Mammary epithelial cell (primary cell): ENCODE measurements at regions of chr5 and their contacts with region 1.

Region 1: GRCh38 chr5:168987543-168988300 is 313.2 kb downstream of the SLIT3 start:
- DNase-seq: peak; percentile 55
- H3K4me3 ChIP-seq: no peak overlapping the region
- H3K27ac ChIP-seq: no peak overlapping the region
- H3K4me1 ChIP-seq: peaks cover 14% of the 10 kb centered on the region
- H3K27me3 ChIP-seq: no peaks in the 10 kb centered on the region
- CTCF ChIP-seq: peak; percentile 86 to 88

Region 2: DNA sequence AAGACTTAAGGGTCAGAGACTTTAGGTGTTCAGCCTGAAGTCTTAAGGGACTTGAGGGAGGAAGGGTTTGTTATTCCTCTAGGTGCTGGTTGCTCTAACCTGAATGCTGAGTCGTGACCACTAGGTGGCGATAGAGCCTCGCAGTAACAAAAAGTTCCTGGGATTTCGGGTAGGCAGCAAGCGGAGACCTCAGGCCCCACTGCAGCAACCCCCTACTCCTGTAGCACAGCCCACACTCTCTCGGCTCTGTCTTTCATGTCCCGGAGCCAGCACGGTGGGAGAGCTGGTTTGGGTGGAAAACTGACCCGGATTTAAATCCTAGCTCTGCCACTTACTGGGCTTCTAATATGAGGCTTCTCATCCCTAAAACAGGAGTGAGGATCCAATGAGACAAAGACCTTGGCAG is 308.2 kb before region 1 on chr5:
- CTCF ChIA-PET with region 1: no interaction called
- dilution Hi-C with region 1: no loop called
- in situ Hi-C with region 1: no loop called
- intact Hi-C with region 1: loop called (anchors 1 kb)
- DNase-seq: peak; percentile 52
- H3K4me3 ChIP-seq: no peak overlapping the region
- H3K27ac ChIP-seq: no peak overlapping the region
- H3K4me1 ChIP-seq: no peaks in the 10 kb centered on the region
- H3K27me3 ChIP-seq: no peaks in the 10 kb centered on the region
- CTCF ChIP-seq: peak; percentile 87 to 92

Region 3: GRCh38 chr5:168706655-168707069 is 281.1 kb before region 1 on chr5:
- CTCF ChIA-PET with region 1: no interaction called
- dilution Hi-C with region 1: no loop called
- in situ Hi-C with region 1: no loop called
- intact Hi-C with region 1: loop called (anchors 1 kb)
- DNase-seq: peak; percentile 23
- H3K4me3 ChIP-seq: no peak overlapping the region
- H3K27ac ChIP-seq: no peak overlapping the region
- H3K4me1 ChIP-seq: no peaks in the 10 kb centered on the region
- H3K27me3 ChIP-seq: no peaks in the 10 kb centered on the region
- CTCF ChIP-seq: peak; percentile 48 to 86

Region 4: GRCh38 chr5:168807287-168807686 is 180.4 kb before region 1 on chr5:
- CTCF ChIA-PET with region 1: no interaction called
- dilution Hi-C with region 1: no loop called
- in situ Hi-C with region 1: no loop called
- intact Hi-C with region 1: no loop called
- DNase-seq: no peak
- H3K4me3 ChIP-seq: no peak overlapping the region
- H3K27ac ChIP-seq: no peak overlapping the region
- H3K4me1 ChIP-seq: no peaks in the 10 kb centered on the region
- H3K27me3 ChIP-seq: no peaks in the 10 kb centered on the region
- CTCF ChIP-seq: no peak

Region 5: GRCh38 chr5:169006842-169007790 is 19.4 kb after region 1 on chr5:
- CTCF ChIA-PET with region 1: interaction called, 35 read pairs
- dilution Hi-C with region 1: no loop called
- in situ Hi-C with region 1: no loop called
- intact Hi-C with region 1: no loop called
- DNase-seq: peak; percentile 91
- H3K4me3 ChIP-seq: no peak overlapping the region
- H3K27ac ChIP-seq: peak overlapping the region; percentile 91
- H3K4me1 ChIP-seq: peaks cover 23% of the 10 kb centered on the region
- H3K27me3 ChIP-seq: no peaks in the 10 kb centered on the region
- CTCF ChIP-seq: no peak

Region 6: GRCh38 chr5:169100421-169101075 is 112.8 kb after region 1 on chr5:
- CTCF ChIA-PET with region 1: no interaction called
- dilution Hi-C with region 1: no loop called
- in situ Hi-C with region 1: no loop called
- intact Hi-C with region 1: loop called (anchors 5 kb)
- DNase-seq: peak; percentile 94
- H3K4me3 ChIP-seq: no peak overlapping the region
- H3K27ac ChIP-seq: peak overlapping the region; percentile 7
- H3K4me1 ChIP-seq: peaks cover 34% of the 10 kb centered on the region
- H3K27me3 ChIP-seq: no peaks in the 10 kb centered on the region
- CTCF ChIP-seq: peak in 1 of 2 donors; percentile 25

Region 7: GRCh38 chr5:169197343-169197742 is 209.6 kb after region 1 on chr5:
- CTCF ChIA-PET with region 1: interaction called, 7 read pairs
- dilution Hi-C with region 1: no loop called
- in situ Hi-C with region 1: loop called in 1 of 2 experiments (anchors 10 kb)
- intact Hi-C with region 1: loop called (anchors 1 kb)
- DNase-seq: peak; percentile 24
- H3K4me3 ChIP-seq: no peak overlapping the region
- H3K27ac ChIP-seq: no peak overlapping the region
- H3K4me1 ChIP-seq: peaks cover 14% of the 10 kb centered on the region
- H3K27me3 ChIP-seq: no peaks in the 10 kb centered on the region
- CTCF ChIP-seq: peak; percentile 53 to 80